ENCODE measurements at regions of chr12 and their contacts with region 1.

Region 1: GRCh38 chr12:52969828-52970569 is 21.1 kb downstream of the KRT18 start:
- DNase-seq: peak; percentile 28
- H3K4me3 ChIP-seq: no peak overlapping the region
- H3K27ac ChIP-seq: no peak overlapping the region
- H3K4me1 ChIP-seq: peaks cover 4% of the 10 kb centered on the region
- H3K27me3 ChIP-seq: peaks cover 25% of the 10 kb centered on the region
- CTCF ChIP-seq: no peak

Region 2: GRCh38 chr12:52895061-52895887 is 74.7 kb before region 1 on chr12:
- intact Hi-C with region 1: loop called (anchors 5 kb)
- DNase-seq: no peak
- H3K4me3 ChIP-seq: no peak overlapping the region
- H3K27ac ChIP-seq: no peak overlapping the region
- H3K4me1 ChIP-seq: peaks cover 4% of the 10 kb centered on the region
- H3K27me3 ChIP-seq: peaks cover 17% of the 10 kb centered on the region
- CTCF ChIP-seq: no peak